Naive thymus-derived CD4-positive, alpha-beta T cell (primary cell): ENCODE measurements at regions of chr11 and their contacts with region 1.

Region 1: DNA sequence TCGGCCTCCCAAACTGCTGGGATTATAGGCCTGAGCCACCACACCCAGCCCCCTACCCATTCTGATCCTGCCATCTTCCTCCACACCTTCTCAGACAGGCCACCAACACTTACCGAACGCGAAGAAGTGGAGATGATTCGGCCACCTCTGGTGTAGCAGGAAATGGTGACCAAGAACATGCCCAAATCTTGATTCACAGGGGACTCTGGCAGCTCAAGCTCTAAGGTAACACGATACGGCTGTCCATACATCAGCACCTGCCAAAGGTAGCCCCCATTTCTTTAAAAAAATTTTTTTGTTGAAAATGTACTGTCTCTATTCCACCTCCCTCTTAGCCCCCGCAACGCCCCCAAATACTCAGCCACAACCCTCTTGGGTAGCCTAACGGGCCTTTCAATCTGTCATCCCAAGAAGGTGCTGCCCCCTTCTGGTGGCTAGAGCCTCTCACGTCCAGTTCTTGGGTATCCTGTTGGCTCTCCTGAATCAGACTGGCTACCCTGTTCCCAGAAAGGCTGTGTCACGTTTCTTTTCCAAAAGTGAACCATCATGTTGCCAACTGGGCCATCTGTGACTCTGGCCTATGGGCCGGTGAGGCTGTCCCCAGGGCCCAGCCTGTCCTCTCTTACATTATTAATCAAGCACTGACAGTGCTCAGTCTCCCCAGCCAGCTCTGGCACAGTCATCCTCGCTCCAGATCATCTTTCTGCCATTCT is 5.3 kb upstream of the LRRN4CL start:
- DNase-seq: peak; percentile 50 to 80 (median 70)
- ATAC-seq: peak; percentile 93
- H3K4me3 ChIP-seq: no peak overlapping the region
- H3K4me3 Mint-ChIP-seq: peak overlapping the region in 1 of 10 donors; percentile 14
- H3K27ac ChIP-seq: no peak overlapping the region
- H3K27ac Mint-ChIP-seq: peak overlapping the region in 5 of 9 donors; percentile 1 to 78 (median 18)
- H3K4me1 ChIP-seq: peaks cover 0 to 6% of the 10 kb centered on the region in 2 donors
- H3K4me1 Mint-ChIP-seq: peaks cover 0 to 8% (median 6%) of the 10 kb centered on the region in 7 donors
- H3K27me3 ChIP-seq: no peaks in the 10 kb centered on the region
- H3K27me3 Mint-ChIP-seq: no peaks in the 10 kb centered on the region

Region 2: GRCh38 chr11:62427630-62428233 is 266.9 kb before region 1 on chr11:
- CTCF ChIA-PET with region 1: interaction called, 11 read pairs
- POLR2A ChIA-PET with region 1: no interaction called
- intact Hi-C with region 1: loop called in 1 of 2 experiments (anchors 1 kb)
- DNase-seq: peak in 1 of 9 donors; percentile 34
- ATAC-seq: peak; percentile 54
- H3K4me3 ChIP-seq: no peak overlapping the region
- H3K4me3 Mint-ChIP-seq: peak overlapping the region in 3 of 10 donors; percentile 19 to 61 (median 43)
- H3K27ac ChIP-seq: no peak overlapping the region
- H3K27ac Mint-ChIP-seq: peak overlapping the region in 6 of 9 donors; percentile 26 to 91 (median 87)
- H3K4me1 ChIP-seq: peaks cover 19 to 24% of the 10 kb centered on the region in 2 donors
- H3K4me1 Mint-ChIP-seq: peaks cover 24 to 65% (median 32%) of the 10 kb centered on the region in 7 donors
- H3K27me3 ChIP-seq: no peaks in the 10 kb centered on the region
- H3K27me3 Mint-ChIP-seq: peaks cover 0 to 5% (median 0%) of the 10 kb centered on the region in 5 donors

Region 3: DNA sequence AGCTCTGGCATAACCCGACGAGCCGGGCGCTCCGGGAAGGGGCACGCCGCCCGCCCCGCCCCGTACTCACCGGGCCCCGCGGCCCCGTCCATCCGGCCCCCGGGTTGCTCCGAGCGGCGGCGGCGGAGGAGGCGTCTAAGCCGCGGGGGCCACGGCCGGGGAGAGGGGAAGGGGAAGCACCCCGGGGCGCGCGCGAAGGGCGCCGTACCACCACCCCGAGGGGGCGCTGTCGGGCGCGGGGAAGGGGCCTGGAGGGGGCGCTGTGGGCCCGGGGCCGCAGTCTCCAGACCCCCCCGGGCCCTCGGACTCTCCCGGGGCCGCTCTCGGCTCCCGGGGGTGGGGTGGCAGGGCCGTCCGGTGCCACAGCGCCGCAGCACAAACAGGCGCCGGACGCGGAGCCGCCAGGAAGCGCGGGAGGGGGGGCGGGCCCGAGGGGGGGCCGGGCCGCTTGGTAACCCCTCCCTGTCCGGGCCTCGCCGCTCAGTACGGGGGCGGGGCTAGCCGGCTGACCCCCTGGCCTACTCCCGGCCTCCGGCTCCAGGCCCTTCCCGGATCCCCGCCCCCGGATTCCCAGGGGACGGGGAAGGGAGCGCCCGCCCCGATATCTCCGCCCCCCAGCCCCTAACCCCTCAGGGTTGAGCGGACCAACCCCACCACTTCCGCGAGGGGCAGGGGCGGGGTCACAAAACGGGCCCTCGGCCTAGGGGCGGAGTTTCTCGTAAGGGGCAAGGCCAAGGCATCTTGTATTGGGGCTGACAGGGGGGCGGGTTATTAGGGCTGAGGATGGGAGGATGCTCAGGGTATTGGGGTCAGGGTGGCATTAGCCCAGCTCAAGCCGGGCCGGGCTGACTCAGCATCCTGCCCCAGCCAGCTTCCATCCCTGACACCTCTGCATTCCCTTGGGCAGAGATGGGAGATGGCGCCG is 82.0 kb before region 1 on chr11 and contains the starts of genes EML3 and ROM1:
- CTCF ChIA-PET with region 1: interaction called, 4 read pairs
- POLR2A ChIA-PET with region 1: interaction called, 3 read pairs
- intact Hi-C with region 1: loop called (anchors 1 kb)
- DNase-seq: peak; percentile 74 to 96 (median 83)
- ATAC-seq: peak; percentile 90
- H3K4me3 ChIP-seq: peak within 1 kb of the TSS; percentile 99
- H3K4me3 Mint-ChIP-seq: peak within 1 kb of the TSS; percentile 89 to 100 (median 96)
- H3K27ac ChIP-seq: peak within 1 kb of the TSS; percentile 92
- H3K27ac Mint-ChIP-seq: peak within 1 kb of the TSS; percentile 93 to 100 (median 97)
- H3K4me1 ChIP-seq: peaks cover 19 to 32% of the 10 kb centered on the region in 2 donors
- H3K4me1 Mint-ChIP-seq: peaks cover 31 to 56% (median 48%) of the 10 kb centered on the region in 7 donors
- H3K27me3 ChIP-seq: no peaks in the 10 kb centered on the region
- H3K27me3 Mint-ChIP-seq: no peaks in the 10 kb centered on the region
- total RNA-seq, gene EML3: 152 to 209 (median 188) TPM
- total RNA-seq, gene ROM1: 1.2 to 2.4 (median 2.0) TPM

Region 4: DNA sequence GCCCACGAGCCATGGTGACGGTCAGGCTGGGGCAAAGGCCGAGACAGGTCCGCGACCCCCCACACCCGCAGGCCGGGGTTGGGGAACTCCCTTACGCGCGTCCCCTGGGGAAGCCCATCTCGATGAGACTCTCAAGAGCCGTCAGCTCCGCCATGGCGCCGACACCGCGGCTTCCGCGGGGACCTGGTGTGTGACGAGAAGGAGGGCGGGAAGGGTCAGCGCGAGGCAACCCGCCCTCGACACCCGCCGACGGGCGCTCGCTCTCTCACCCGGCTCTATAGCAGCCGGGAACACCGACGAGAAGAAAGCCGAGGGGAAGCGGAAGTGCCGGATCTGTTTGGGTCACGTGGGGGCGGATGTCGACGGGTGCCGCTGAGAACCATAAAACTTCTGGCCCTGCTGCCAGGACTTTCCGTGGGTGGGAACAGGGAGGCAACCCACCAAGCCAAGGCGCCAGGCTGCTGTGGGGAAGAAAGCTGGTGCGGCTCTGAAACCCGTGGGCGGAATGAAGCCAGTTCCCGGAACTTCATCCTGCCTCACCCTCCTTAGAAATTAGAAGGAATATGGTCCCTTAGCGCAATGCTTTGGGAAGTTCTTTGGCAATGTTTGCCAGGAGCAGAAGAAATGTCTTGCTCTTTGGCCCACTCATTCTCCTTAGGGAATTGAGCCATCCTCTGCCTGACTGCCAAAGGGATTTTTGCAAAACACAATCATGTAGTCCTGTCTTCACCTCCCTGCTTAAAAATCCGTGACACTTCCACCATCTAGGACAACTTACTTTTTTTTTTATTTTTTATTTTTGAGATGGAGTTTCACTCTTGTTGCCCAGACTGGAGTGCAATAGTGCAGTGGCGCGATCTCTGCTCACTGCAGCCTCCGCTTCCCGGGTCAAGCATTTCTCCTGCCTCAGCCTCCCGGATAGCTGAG is 15.6 kb before region 1 on chr11 and contains the start of gene UBXN1:
- CTCF ChIA-PET with region 1: interaction called, 24 read pairs
- POLR2A ChIA-PET with region 1: interaction called, 8 read pairs
- intact Hi-C with region 1: loop called (anchors 1 kb)
- DNase-seq: peak; percentile 63 to 84 (median 81)
- ATAC-seq: peak; percentile 91
- H3K4me3 ChIP-seq: peak within 1 kb of the TSS; percentile 87
- H3K4me3 Mint-ChIP-seq: peak within 1 kb of the TSS; percentile 86 to 93 (median 90)
- H3K27ac ChIP-seq: peak within 1 kb of the TSS; percentile 98
- H3K27ac Mint-ChIP-seq: peak within 1 kb of the TSS; percentile 88 to 98 (median 94)
- H3K4me1 ChIP-seq: peaks cover 13 to 15% of the 10 kb centered on the region in 2 donors
- H3K4me1 Mint-ChIP-seq: peaks cover 19 to 41% (median 37%) of the 10 kb centered on the region in 7 donors
- H3K27me3 ChIP-seq: no peaks in the 10 kb centered on the region
- H3K27me3 Mint-ChIP-seq: no peaks in the 10 kb centered on the region
- total RNA-seq, gene UBXN1: 114 to 215 (median 207) TPM